Endothelial cell of umbilical vein (primary cell): ENCODE measurements at regions of chr11 and their contacts with region 1.

Region 1: GRCh38 chr11:23540101-23540561 is 679.9 kb upstream of the CCDC179 start:
- DNase-seq: peak; percentile 61
- H3K4me3 ChIP-seq: no peak overlapping the region
- H3K27ac ChIP-seq: no peak overlapping the region
- H3K4me1 ChIP-seq: peaks cover 7% of the 10 kb centered on the region
- H3K27me3 ChIP-seq: no peaks in the 10 kb centered on the region
- CTCF ChIP-seq: peak; percentile 67 to 74
- POLR2A ChIP-seq: no peak

Region 2: GRCh38 chr11:23021287-23021863 is 518.8 kb before region 1 on chr11:
- CTCF ChIA-PET with region 1: interaction called, 5 read pairs
- POLR2A ChIA-PET with region 1: no interaction called
- dilution Hi-C with region 1: no loop called
- intact Hi-C with region 1: loop called (anchors 1 kb)
- DNase-seq: peak; percentile 33
- H3K4me3 ChIP-seq: no peak overlapping the region
- H3K27ac ChIP-seq: no peak overlapping the region
- H3K4me1 ChIP-seq: no peaks in the 10 kb centered on the region
- H3K27me3 ChIP-seq: no peaks in the 10 kb centered on the region
- CTCF ChIP-seq: peak; percentile 60 to 66
- POLR2A ChIP-seq: no peak

Region 3: GRCh38 chr11:23311986-23312942 is 227.9 kb before region 1 on chr11:
- CTCF ChIA-PET with region 1: no interaction called
- POLR2A ChIA-PET with region 1: no interaction called
- dilution Hi-C with region 1: no loop called
- intact Hi-C with region 1: no loop called
- DNase-seq: peak; percentile 20
- H3K4me3 ChIP-seq: no peak overlapping the region
- H3K27ac ChIP-seq: peak overlapping the region; percentile 23
- H3K4me1 ChIP-seq: peaks cover 28% of the 10 kb centered on the region
- H3K27me3 ChIP-seq: no peaks in the 10 kb centered on the region
- CTCF ChIP-seq: no peak
- POLR2A ChIP-seq: no peak

Region 4: DNA sequence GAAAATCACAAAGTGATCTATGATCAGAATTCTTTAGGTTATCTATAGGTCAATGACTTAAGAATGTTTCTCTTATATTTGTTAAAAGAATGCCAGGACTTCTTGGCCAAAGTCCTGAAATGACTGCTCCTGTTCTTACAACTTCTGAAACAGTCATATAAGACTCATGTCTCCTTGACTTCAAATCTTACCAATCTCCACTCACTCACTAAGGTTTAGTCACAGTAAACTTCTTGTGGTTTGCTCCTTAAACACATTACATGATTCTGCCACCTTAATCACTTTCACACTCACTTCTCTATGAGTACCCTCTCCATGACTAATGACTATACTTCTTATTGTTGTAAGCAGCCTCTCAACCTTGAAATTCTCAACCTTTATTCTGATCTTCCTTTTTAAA is 31.1 kb before region 1 on chr11:
- CTCF ChIA-PET with region 1: interaction called, 14 read pairs
- POLR2A ChIA-PET with region 1: no interaction called
- dilution Hi-C with region 1: no loop called
- intact Hi-C with region 1: no loop called
- DNase-seq: peak; percentile 50
- H3K4me3 ChIP-seq: no peak overlapping the region
- H3K27ac ChIP-seq: no peak overlapping the region
- H3K4me1 ChIP-seq: no peaks in the 10 kb centered on the region
- H3K27me3 ChIP-seq: no peaks in the 10 kb centered on the region
- CTCF ChIP-seq: no peak
- POLR2A ChIP-seq: no peak

Region 5: DNA sequence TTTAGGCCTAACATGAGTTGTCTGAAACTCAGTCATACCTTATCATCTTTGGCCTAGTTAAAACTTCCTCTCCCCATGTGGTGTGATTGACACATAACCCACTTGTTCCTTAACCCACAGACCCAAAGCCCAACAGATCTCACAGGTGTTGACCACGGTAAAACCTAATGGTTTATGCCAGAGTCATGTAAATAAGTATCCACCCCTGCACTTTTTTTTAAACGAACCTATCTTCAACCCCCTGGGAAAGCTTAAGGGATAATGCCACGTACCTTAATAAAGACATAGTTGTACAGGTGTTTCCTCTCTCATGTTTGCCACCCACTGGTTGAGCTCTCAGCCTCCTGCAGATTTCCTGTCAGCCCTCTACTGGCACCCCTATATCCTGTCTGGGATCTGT is 29.4 kb after region 1 on chr11:
- CTCF ChIA-PET with region 1: interaction called, 15 read pairs
- POLR2A ChIA-PET with region 1: no interaction called
- dilution Hi-C with region 1: no loop called
- intact Hi-C with region 1: no loop called
- DNase-seq: peak; percentile 50
- H3K4me3 ChIP-seq: no peak overlapping the region
- H3K27ac ChIP-seq: peak overlapping the region; percentile 8
- H3K4me1 ChIP-seq: peaks cover 18% of the 10 kb centered on the region
- H3K27me3 ChIP-seq: no peaks in the 10 kb centered on the region
- CTCF ChIP-seq: no peak
- POLR2A ChIP-seq: no peak

Region 6: GRCh38 chr11:24386546-24387397 is 846.6 kb after region 1 on chr11:
- CTCF ChIA-PET with region 1: interaction called, 41 read pairs
- POLR2A ChIA-PET with region 1: no interaction called
- dilution Hi-C with region 1: no loop called
- intact Hi-C with region 1: loop called (anchors 1 kb)
- DNase-seq: peak; percentile 38
- H3K4me3 ChIP-seq: no peak overlapping the region
- H3K27ac ChIP-seq: no peak overlapping the region
- H3K4me1 ChIP-seq: no peaks in the 10 kb centered on the region
- H3K27me3 ChIP-seq: no peaks in the 10 kb centered on the region
- CTCF ChIP-seq: peak; percentile 18 to 30
- POLR2A ChIP-seq: no peak